Esophagus muscularis mucosa (tissue), 4 donors: ENCODE measurements at regions of chr14 and their contacts with region 1.

Region 1: DNA sequence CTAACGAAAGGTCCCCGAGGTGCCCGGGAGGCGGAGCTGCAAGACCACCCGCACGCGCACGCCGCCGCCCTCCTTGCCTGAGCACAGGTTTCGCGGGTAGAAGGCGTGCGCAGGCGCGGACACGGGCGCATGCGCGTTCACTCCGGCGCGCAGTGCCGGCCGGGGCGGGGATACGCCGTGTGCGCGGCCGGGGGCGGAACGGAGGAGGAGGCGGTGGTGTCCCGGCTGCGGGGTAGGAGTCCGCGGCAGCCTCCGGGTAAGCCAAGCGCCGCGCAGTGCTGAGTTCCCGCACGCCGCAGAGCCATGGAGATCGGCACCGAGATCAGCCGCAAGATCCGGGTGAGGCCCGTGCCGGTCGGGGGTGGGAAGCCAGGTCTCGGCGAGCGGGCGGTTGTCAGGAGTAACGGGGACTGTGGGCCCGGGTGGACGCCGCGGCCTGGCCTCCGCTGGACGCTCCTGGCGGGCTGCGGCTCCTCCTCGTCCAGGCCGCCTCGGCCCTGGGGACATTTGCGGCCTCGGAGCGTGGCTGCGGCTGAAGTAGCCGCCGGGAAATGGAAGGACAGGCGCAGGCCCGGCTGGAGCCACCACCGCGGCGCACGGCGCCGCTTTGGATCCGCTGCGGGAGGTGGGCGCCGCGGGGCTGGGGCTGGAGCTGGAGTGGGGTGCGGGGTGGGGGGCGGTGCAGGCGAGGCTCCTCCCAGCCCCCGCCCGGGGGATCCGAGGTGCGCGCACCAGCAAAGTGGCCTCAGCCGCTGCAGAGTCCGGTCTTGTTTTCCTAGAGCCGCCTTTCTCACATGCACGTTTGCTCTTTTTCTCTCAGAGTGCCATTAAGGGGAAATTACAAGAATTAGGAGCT is at the start of gene ZC3H14:
- DNase-seq: peak; percentile 92
- H3K4me3 ChIP-seq: peak within 1 kb of the TSS; percentile 70 to 100 (median 80)
- H3K27ac ChIP-seq: peak within 1 kb of the TSS; percentile 90 to 97 (median 93)
- H3K4me1 ChIP-seq: peaks cover 21 to 37% (median 33%) of the 10 kb centered on the region in 4 donors
- H3K27me3 ChIP-seq: no peaks in the 10 kb centered on the region
- CTCF ChIP-seq: peak in 1 of 3 experiments; percentile 19
- EP300 ChIP-seq: no peak
- POLR2A ChIP-seq: no peak
- total RNA-seq, gene ZC3H14: 48.6 to 60.0 (median 58.5) TPM

Region 2: DNA sequence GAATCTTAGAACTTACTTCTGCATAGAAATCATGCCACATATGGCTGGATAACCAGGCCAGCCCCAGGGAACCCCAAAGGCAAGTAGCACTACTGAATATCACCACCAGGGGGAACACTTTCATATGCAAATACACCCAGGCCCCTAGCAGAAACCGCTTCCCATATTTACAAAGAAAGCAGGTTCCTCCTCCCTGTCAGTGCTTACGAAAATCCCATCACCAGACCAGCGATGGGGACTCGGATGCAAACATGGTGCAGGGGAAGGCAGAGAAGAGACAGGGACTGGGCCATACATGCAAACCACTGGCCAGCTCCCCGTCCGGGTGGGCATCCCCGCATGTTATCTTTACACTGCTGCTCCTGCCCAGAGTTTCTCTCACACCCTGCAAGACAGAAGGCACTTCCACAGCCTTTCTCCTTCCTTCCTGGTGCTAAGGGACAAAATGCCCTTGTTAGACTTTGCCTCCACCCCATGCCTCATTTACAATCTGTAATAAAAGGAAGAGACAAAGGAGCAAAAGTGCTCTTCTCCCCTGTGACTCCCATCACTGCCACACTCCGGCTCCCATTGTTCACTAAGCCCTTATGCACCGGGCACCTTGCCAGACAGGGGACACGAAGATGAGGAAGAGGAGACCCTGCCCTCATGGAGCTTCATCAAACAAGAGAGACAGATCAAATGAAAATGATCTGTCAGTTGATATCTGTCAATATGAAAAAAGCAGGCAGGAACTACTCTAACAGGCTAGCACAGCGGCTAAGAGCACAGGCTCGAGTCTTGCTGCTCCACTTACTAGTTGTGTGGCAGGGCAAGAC is 70.6 kb before region 1 on chr14:
- intact Hi-C with region 1: loop called (anchors 5 kb)
- DNase-seq: peak; percentile 95
- H3K4me3 ChIP-seq: no peak overlapping the region
- H3K27ac ChIP-seq: peak overlapping the region in 1 of 4 donors; percentile 34
- H3K4me1 ChIP-seq: peaks cover 6 to 7% (median 6%) of the 10 kb centered on the region in 4 donors
- H3K27me3 ChIP-seq: no peaks in the 10 kb centered on the region
- CTCF ChIP-seq: peak; percentile 90 to 98 (median 93)
- EP300 ChIP-seq: no peak
- POLR2A ChIP-seq: no peak

Region 3: DNA sequence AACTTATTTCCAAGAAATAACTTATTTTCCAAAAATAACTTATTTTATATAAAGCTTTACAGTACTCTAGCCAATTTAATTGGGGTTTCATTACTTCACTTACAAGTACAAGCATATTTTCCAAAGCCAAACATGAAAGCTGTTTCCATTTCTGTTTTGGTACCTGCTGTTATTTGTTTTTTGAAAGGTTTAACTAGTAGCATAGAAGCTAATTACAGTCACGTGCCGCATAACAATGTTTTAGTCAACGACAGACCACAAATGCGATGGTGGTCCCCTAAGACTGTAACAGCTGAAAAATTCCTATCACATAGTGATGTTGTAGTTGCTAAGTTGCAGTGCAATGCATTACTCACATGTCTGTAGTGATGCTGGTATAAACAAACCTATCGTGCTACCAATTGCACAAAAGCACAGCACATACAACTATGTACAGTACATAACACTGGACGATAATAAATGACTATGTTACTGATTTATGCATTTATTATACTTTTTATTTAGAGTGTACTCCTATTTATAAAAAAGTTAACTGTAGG is 29.9 kb before region 1 on chr14:
- intact Hi-C with region 1: no loop called
- DNase-seq: no peak
- H3K4me3 ChIP-seq: no peak overlapping the region
- H3K27ac ChIP-seq: no peak overlapping the region
- H3K4me1 ChIP-seq: peaks cover 22 to 30% (median 26%) of the 10 kb centered on the region in 4 donors
- H3K27me3 ChIP-seq: no peaks in the 10 kb centered on the region
- CTCF ChIP-seq: no peak
- EP300 ChIP-seq: no peak
- POLR2A ChIP-seq: no peak

Region 4: DNA sequence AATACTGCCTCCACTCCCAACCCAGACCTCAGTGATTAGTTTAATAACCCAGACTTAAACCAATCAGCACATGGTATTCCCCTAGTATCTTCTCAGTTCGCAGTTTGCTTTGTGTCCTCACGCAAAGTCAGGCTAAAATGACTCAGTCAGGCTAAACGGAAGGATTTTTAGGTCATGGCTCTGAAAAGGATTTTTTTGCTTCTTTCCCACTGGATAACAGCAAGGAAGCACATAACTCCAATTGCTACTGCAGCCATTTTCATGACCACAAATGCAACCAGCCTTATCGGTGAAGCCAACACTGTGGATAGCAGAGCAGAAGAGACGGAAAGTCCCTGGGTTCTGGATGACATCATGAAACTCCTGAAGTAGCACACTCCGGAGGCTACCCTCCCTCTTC is 67.5 kb after region 1 on chr14:
- intact Hi-C with region 1: no loop called
- DNase-seq: no peak
- H3K4me3 ChIP-seq: no peak overlapping the region
- H3K27ac ChIP-seq: no peak overlapping the region
- H3K4me1 ChIP-seq: no peaks in the 10 kb centered on the region
- H3K27me3 ChIP-seq: no peaks in the 10 kb centered on the region
- CTCF ChIP-seq: no peak
- EP300 ChIP-seq: no peak
- POLR2A ChIP-seq: no peak